Heart left ventricle (tissue), 16 donors: ENCODE measurements at regions of chr12 and their contacts with region 1.

Region 1: GRCh38 chr12:68807576-68808387 is at the start of gene MDM2:
- DNase-seq: peak; percentile 94 to 99 (median 96)
- ATAC-seq: peak; percentile 96 to 97 (median 96)
- H3K4me3 ChIP-seq: peak within 1 kb of the TSS; percentile 71 to 98 (median 87)
- H3K27ac ChIP-seq: peak within 1 kb of the TSS; percentile 92 to 100 (median 96)
- H3K4me1 ChIP-seq: peaks cover 0 to 47% (median 13%) of the 10 kb centered on the region in 12 donors
- H3K27me3 ChIP-seq: no peaks in the 10 kb centered on the region
- CTCF ChIP-seq: peak; percentile 76 to 97 (median 86)
- POLR2A ChIP-seq: peak in 1 of 2 donors; percentile 74
- total RNA-seq, gene MDM2: 41.0 to 78.8 (median 50.9) TPM

Region 2: DNA sequence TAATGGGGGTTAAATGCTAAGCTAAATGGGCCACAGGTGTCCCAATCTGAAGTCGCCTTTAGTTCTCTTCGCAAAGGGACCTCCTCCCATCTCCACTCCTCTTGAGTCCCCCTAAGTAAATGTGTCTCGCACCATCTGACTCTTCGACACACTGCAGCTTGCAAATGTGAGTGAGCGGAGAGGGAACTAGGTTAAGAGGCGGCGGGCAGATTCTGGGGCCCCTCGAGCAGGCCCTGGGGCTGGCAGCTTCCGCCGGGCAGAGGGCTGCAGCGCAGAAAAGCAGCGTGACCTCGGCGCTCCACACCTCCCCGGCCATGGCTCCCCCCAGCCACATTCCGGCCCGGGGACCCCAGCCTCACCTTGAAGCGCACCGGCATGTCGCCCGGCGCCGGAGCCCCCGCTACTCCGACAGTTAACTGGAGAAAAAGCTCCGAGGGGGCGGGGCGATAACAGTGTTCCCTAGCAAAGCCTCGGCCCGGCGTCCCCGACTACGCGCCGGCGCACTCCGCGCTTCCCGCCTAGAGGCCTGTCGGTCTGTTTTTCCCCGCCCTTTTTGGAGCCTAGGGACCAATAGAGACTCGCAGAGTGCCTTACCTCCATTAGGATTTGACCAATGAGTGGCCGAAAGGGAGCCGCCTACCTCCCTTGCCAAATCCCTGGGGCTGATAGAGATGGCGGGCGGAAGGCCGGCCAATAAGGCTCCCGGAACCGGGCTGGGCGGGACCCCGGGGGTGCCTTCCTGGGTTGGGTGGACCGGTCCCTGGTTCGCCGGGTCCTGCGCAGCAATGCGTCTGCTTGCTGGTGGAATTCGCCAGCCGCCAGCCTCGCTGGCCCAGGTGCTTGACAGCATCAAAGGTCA is 475.7 kb before region 1 on chr12 and contains the start of gene MDM1:
- intact Hi-C with region 1: loop called in 2 of 10 experiments (anchors 10 kb)
- DNase-seq: peak; percentile 97 to 98 (median 98)
- ATAC-seq: peak; percentile 99 to 100 (median 100)
- H3K4me3 ChIP-seq: peak within 1 kb of the TSS; percentile 55 to 98 (median 80)
- H3K27ac ChIP-seq: peak within 1 kb of the TSS in 11 of 12 donors; percentile 24 to 82 (median 76)
- H3K4me1 ChIP-seq: peaks cover 0 to 26% (median 14%) of the 10 kb centered on the region in 12 donors
- H3K27me3 ChIP-seq: no peaks in the 10 kb centered on the region
- CTCF ChIP-seq: no peak
- POLR2A ChIP-seq: peak in 1 of 2 donors; percentile 56
- total RNA-seq, gene MDM1: 4.0 to 8.4 (median 5.8) TPM